MCF 10A (cell line): ENCODE measurements at regions of chr1 and their contacts with region 1.

Region 1: GRCh38 chr1:34786521-34787325 is 5.7 kb downstream of the GJB3 start:
- DNase-seq: peak; percentile 68
- H3K4me3 Mint-ChIP-seq: no peak overlapping the region
- H3K27ac Mint-ChIP-seq: no peak overlapping the region
- H3K4me1 Mint-ChIP-seq: peaks cover 32% of the 10 kb centered on the region
- H3K27me3 Mint-ChIP-seq: no peaks in the 10 kb centered on the region
- CTCF ChIP-seq: peak; percentile 83

Region 2: GRCh38 chr1:34754964-34755637 is 31.6 kb before region 1 on chr1 and contains the start of gene GJB5:
- CTCF ChIA-PET with region 1: interaction called, 20 read pairs
- POLR2A ChIA-PET with region 1: no interaction called
- intact Hi-C with region 1: loop called (anchors 1 kb)
- DNase-seq: peak; percentile 94
- H3K4me3 Mint-ChIP-seq: peak within 1 kb of the TSS; percentile 93
- H3K27ac Mint-ChIP-seq: peak within 1 kb of the TSS; percentile 96
- H3K4me1 Mint-ChIP-seq: peaks cover 16% of the 10 kb centered on the region
- H3K27me3 Mint-ChIP-seq: no peaks in the 10 kb centered on the region
- CTCF ChIP-seq: no peak
- total RNA-seq, gene GJB5: 26.5 and 33.2 TPM in 2 replicates

Region 3: GRCh38 chr1:34808051-34808810 is 21.5 kb after region 1 on chr1:
- CTCF ChIA-PET with region 1: interaction called, 13 read pairs
- POLR2A ChIA-PET with region 1: no interaction called
- intact Hi-C with region 1: no loop called
- DNase-seq: no peak
- H3K4me3 Mint-ChIP-seq: no peak overlapping the region
- H3K27ac Mint-ChIP-seq: no peak overlapping the region
- H3K4me1 Mint-ChIP-seq: no peaks in the 10 kb centered on the region
- H3K27me3 Mint-ChIP-seq: no peaks in the 10 kb centered on the region
- CTCF ChIP-seq: no peak

Region 4: DNA sequence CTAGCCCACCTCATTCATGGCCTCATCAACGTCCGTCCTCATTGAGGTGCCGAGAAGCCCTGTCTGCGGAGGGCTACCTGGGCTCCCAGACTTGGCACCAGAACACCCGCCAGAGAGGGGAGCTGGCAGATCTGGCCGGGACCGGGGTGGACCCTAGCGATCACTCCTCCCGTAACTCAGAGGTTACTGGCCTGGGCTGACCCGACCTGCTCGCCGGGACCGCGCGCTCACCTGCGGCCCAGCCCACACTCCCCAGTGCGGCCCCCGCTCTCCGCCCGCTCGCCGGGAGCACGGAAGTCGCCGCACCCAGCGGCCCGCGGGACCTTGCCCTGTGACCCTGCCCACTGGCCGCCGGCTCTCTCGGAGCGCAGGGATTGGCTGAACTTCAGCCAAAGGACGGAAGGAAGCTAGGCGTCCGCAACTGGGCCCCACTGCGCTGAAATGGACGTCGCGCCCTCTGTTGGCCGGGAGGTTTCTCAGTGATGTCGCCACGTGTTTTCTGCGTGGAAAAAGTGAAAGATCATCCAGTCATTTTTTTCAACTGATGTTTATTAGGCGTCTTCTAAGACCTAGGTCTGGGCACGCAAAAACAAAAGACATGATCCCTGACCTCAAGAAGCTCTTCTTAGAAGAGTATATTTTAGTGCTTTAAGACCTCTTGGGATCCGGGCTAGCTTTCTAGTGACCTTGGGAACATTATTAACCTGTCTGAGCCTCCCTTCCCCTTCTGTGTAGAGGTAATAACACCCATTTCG is 72.9 kb after region 1 on chr1 and contains the start of gene SMIM12:
- CTCF ChIA-PET with region 1: interaction called, 15 read pairs
- POLR2A ChIA-PET with region 1: interaction called, 10 read pairs
- intact Hi-C with region 1: no loop called
- DNase-seq: peak; percentile 95
- H3K4me3 Mint-ChIP-seq: peak within 1 kb of the TSS; percentile 93
- H3K27ac Mint-ChIP-seq: peak within 1 kb of the TSS; percentile 79
- H3K4me1 Mint-ChIP-seq: peaks cover 16% of the 10 kb centered on the region
- H3K27me3 Mint-ChIP-seq: peaks cover 9% of the 10 kb centered on the region
- CTCF ChIP-seq: peak; percentile 79
- total RNA-seq, gene SMIM12: 40.2 and 41.4 TPM in 2 replicates

Region 5: DNA sequence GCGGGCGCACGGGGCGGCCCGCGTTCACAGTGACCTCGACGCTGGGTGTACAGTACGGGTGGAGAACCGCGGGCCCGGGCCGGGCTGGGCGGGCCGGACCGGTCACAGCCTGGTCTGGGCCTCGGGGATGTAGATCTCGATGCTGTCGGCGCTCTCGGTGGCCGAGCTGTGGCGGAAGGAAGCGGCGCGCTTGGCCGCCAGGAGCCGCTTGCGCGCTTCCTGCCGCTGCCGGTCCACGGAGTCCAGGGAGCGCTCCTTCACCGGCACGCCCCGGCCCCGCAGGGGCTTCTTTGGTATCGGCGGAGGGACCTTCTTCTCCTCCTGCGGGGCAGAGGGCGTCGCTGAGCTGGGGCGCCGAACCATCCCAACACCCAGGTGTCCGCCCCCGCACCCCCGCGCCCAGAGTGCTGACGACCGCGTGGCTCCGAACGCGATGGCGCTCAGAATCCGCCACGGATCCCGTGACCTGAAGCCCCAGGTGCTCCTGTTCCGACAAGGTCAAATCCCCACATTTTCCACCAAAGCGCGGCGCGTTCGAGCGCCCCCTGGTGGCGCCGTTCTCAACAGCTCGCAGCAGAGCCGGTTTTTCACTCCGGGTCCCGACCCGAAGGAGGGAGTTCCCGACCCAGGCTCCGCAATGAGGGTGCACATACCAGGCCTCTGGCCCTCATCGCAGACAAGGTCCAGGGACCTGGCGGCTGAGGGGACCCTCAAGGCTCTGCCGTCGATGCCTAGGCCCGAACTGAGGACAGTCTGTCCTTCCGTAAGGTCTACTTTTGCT is 79.4 kb after region 1 on chr1:
- CTCF ChIA-PET with region 1: interaction called, 5 read pairs
- POLR2A ChIA-PET with region 1: interaction called, 8 read pairs
- intact Hi-C with region 1: loop called (anchors 1 kb)
- DNase-seq: peak; percentile 76
- H3K4me3 Mint-ChIP-seq: peak overlapping the region; percentile 73
- H3K27ac Mint-ChIP-seq: peak overlapping the region; percentile 51
- H3K4me1 Mint-ChIP-seq: no peaks in the 10 kb centered on the region
- H3K27me3 Mint-ChIP-seq: peaks cover 31% of the 10 kb centered on the region
- CTCF ChIP-seq: peak; percentile 94

Region 6: DNA sequence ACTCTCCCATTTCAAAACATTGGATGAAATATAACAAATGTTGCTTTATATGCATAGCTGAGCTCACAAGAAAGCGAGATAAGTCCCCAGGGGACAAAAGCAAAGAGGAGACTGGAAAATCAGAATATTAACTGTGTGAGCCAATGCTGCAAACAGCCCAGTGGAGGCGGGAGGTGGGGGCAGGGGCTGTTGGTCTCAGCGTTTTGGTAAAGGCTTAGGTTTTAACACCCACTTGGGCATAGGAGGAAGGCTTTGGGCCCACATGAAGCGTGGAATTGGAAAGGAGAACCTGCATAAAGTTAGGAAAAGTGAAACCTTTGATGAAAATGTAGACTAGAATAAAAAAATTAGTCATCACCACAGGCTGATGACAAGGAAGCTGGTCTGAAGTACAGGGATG is 103.0 kb after region 1 on chr1:
- CTCF ChIA-PET with region 1: no interaction called
- POLR2A ChIA-PET with region 1: no interaction called
- intact Hi-C with region 1: no loop called
- DNase-seq: no peak
- H3K4me3 Mint-ChIP-seq: no peak overlapping the region
- H3K27ac Mint-ChIP-seq: no peak overlapping the region
- H3K4me1 Mint-ChIP-seq: no peaks in the 10 kb centered on the region
- H3K27me3 Mint-ChIP-seq: peaks cover 12% of the 10 kb centered on the region
- CTCF ChIP-seq: no peak